ENCODE measurements at regions of chr2 and their contacts with region 1.

Region 1: GRCh38 chr2:136628490-136628889 is 136.9 kb upstream of the THSD7B start:
- DNase-seq: no peak
- H3K4me3 ChIP-seq: no peak overlapping the region
- H3K27ac ChIP-seq: no peak overlapping the region
- H3K4me1 ChIP-seq: no peaks in the 10 kb centered on the region
- H3K27me3 ChIP-seq: no peaks in the 10 kb centered on the region
- CTCF ChIP-seq: no peak
- EP300 ChIP-seq: no peak
- POLR2A ChIP-seq: no peak

Region 2: DNA sequence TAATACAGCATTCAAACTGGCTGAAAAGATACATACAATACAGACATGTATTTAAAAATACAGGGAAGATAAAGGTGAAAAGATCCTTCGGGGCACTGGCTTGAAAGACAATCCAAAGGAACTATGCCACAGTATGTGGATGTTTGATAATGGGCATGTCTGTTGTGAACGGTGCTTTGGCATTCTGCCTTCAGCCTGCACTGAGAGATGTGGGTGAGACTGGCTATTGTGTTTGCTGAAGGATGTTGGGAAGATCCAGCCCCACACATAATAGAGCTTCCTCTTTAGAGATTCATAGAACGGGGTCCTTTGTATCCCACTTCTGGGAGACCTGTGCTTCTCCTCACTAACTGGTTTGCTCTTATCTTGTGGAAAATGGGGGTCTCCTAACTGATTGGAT is 445.4 kb before region 1 on chr2:
- in situ Hi-C with region 1: no loop called
- intact Hi-C with region 1: no loop called
- DNase-seq: no peak
- H3K4me3 ChIP-seq: no peak overlapping the region
- H3K27ac ChIP-seq: no peak overlapping the region
- H3K4me1 ChIP-seq: no peaks in the 10 kb centered on the region
- H3K27me3 ChIP-seq: no peaks in the 10 kb centered on the region
- CTCF ChIP-seq: no peak
- EP300 ChIP-seq: no peak
- POLR2A ChIP-seq: no peak

Region 3: DNA sequence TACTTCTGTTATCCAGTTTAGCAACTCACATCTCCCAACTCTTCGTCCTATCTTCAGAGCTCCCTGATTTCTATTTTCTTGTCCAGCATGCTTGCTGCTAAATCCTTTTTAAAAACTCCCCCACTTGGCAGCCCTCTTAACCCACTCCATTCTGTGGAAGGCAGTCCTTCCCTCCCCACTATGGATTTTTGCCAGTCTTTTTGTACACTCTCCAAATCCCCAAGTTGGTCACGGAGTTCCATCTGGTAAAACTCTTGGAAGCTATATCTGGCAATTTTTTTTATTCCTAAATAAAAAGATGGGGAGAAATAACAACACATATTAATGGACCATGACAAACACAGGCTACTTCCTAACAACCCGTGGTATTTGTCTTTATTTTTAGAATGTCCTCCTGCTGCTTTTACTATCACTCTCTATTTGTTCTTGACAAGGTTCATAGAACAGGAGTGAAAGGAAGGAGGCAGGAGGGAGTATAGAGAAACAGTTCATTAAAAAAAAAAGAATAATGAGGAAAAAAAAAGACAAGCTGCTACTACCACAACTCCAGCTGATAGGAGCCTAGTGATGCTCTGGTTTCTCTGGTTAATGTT is 16.8 kb after region 1 on chr2:
- in situ Hi-C with region 1: no loop called
- intact Hi-C with region 1: loop called (anchors 1 kb)
- DNase-seq: no peak
- H3K4me3 ChIP-seq: no peak overlapping the region
- H3K27ac ChIP-seq: no peak overlapping the region
- H3K4me1 ChIP-seq: no peaks in the 10 kb centered on the region
- H3K27me3 ChIP-seq: no peaks in the 10 kb centered on the region
- CTCF ChIP-seq: no peak
- EP300 ChIP-seq: no peak
- POLR2A ChIP-seq: no peak

Measured in transverse colon (tissue), 4 donors.